Endothelial cell of umbilical vein (primary cell): ENCODE measurements at regions of chr9 and their contacts with region 1.

Region 1: DNA sequence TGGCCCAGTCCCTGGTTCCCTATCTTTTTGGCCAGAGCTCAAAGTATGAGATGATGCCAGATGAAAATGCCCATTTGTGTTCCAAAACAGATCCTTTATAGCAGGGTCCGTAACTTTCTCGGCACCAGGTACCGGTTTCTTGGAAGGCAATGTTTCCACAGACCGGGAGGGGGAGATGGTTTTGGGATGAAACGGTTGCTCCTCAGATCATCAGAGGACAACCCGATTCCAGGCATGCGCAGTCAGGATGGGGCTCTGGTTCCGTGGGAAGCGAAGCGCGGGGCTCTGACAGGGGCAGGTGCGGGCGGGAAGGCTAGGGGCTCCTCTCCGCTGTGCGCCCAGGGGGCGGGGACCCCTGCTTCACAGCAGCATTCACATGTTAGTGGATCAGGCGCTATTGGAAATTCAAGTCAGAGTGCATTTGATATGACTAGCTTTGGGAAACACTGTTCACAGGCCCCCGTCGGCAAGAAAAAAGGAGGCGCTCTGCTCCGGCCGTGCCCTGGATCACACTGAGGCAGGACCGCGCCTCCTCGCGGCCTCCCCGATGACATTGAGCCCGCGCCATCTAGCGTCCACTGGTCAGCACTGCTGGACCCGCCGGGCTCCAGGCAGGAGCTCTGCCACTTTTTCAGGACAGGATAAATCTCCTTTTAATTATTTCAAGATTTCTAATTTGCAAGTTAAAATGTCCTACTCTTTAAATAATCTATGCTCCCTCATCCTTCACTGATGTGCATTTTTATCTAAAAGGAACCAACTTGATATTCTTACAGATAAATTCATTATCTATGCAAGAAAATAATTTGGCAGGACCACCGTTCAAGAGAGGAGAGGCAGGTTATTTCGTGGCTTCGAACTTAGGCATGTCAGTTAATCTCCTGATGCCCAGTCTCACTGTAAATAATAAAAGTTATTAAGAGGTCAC is 190.0 kb downstream of the FANCC start:
- DNase-seq: peak; percentile 78
- H3K4me3 ChIP-seq: peak overlapping the region in 2 of 3 experiments; percentile 33 to 46
- H3K27ac ChIP-seq: no peak overlapping the region
- H3K4me1 ChIP-seq: no peaks in the 10 kb centered on the region
- H3K27me3 ChIP-seq: no peaks in the 10 kb centered on the region
- CTCF ChIP-seq: peak; percentile 97 to 99
- POLR2A ChIP-seq: no peak

Region 2: DNA sequence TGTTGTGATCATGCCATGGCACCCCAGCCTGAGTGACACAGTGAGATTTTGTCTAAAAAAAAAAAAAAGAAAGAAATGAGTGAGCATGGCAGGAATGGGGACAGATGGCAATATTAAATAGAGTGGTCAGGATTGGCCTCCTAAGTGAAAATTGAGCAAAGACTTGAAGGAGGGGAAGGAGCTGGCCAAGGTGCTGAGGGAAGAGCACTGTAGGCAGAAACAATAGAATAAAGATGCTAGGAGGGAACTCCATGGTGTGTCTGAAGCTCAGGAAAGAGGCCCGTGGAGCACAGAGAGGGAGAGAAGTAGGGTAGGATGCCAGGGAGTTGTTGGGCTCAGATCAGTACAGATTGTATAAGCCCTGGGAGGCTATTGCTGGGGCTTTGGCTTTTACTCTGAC is 637.0 kb before region 1 on chr9:
- CTCF ChIA-PET with region 1: no interaction called
- POLR2A ChIA-PET with region 1: no interaction called
- dilution Hi-C with region 1: no loop called
- intact Hi-C with region 1: no loop called
- DNase-seq: no peak
- H3K4me3 ChIP-seq: no peak overlapping the region
- H3K27ac ChIP-seq: no peak overlapping the region
- H3K4me1 ChIP-seq: no peaks in the 10 kb centered on the region
- H3K27me3 ChIP-seq: no peaks in the 10 kb centered on the region
- CTCF ChIP-seq: no peak
- POLR2A ChIP-seq: no peak

Region 3: DNA sequence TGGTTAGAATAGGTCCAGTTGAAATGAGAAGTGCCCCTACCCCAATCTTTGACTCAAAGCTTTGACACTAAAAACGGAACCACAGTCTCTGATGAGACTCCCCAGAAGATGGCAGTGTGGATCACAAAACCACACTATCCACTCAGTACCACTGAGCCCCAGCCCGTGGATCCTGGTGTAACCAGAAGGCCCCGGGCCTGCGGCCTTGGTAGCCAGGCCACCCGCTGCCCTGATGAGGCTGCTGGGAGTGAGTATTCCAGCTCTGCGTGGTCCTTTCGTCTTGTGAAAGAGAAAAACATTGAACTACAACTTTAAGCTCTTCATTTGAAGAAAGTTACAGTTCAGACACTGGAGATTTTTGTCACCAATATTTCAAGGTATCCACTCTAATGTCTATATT is 446.0 kb before region 1 on chr9:
- CTCF ChIA-PET with region 1: interaction called, 707 read pairs
- POLR2A ChIA-PET with region 1: interaction called, 6 read pairs
- dilution Hi-C with region 1: no loop called
- intact Hi-C with region 1: loop called (anchors 1 kb)
- DNase-seq: peak; percentile 67
- H3K4me3 ChIP-seq: no peak overlapping the region
- H3K27ac ChIP-seq: no peak overlapping the region
- H3K4me1 ChIP-seq: no peaks in the 10 kb centered on the region
- H3K27me3 ChIP-seq: peaks cover 3 to 4% of the 10 kb centered on the region in 2 experiments
- CTCF ChIP-seq: peak; percentile 68 to 74
- POLR2A ChIP-seq: no peak

Region 4: GRCh38 chr9:94734054-94734754 is 393.3 kb before region 1 on chr9:
- CTCF ChIA-PET with region 1: interaction called, 14 read pairs
- POLR2A ChIA-PET with region 1: no interaction called
- dilution Hi-C with region 1: no loop called
- intact Hi-C with region 1: no loop called
- DNase-seq: peak; percentile 59
- H3K4me3 ChIP-seq: peak overlapping the region in 1 of 3 experiments; percentile 30
- H3K27ac ChIP-seq: no peak overlapping the region
- H3K4me1 ChIP-seq: peaks cover 15% of the 10 kb centered on the region
- H3K27me3 ChIP-seq: no peaks in the 10 kb centered on the region
- CTCF ChIP-seq: no peak
- POLR2A ChIP-seq: no peak

Region 5: GRCh38 chr9:95004411-95005277 is 122.9 kb before region 1 on chr9:
- CTCF ChIA-PET with region 1: interaction called, 9 read pairs
- POLR2A ChIA-PET with region 1: no interaction called
- dilution Hi-C with region 1: no loop called
- intact Hi-C with region 1: loop called (anchors 2 kb)
- DNase-seq: peak; percentile 19
- H3K4me3 ChIP-seq: peak overlapping the region; percentile 88 to 97 (median 95)
- H3K27ac ChIP-seq: peak overlapping the region; percentile 93
- H3K4me1 ChIP-seq: peaks cover 47% of the 10 kb centered on the region
- H3K27me3 ChIP-seq: no peaks in the 10 kb centered on the region
- CTCF ChIP-seq: no peak
- POLR2A ChIP-seq: peak; percentile 22

Region 6: DNA sequence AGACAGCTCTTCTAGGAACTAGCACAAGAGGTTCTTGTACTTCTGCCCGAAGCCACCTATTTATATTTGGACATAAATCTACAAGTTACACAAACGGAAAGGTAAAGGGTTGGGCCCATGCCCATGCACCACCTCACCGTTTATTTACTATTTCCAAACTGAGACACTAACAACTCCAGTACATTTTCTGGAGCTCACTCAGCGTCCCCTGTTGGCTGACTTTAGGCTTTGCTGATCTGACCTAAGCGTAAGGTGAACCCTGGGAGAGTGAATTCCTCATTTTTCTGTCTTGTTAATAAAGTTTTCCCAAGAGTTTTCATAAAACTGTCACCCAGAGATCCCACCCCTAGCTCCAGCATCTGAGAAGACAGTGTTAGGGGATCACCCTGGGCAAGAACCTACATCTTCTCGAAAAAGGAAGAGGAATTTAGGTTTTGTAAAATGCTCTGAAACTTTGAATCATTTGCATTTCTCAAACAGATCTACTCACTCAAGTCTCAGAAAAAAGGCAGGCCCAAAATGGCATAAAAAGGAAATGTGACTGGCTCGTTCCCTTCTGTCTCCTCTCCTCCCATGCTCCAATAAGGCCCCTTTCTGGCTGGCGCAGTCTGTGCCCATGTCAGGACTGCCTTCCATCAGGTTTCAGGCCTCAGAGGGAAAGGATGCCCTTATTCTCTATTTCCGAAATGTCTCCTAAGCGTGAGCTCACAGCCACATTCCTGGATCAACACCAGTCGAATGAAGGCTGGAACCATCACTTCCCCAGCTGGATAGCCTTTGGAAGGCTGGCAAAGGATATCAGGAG is 11.3 kb before region 1 on chr9:
- CTCF ChIA-PET with region 1: interaction called, 48 read pairs
- POLR2A ChIA-PET with region 1: no interaction called
- dilution Hi-C with region 1: no loop called
- intact Hi-C with region 1: no loop called
- DNase-seq: no peak
- H3K4me3 ChIP-seq: no peak overlapping the region
- H3K27ac ChIP-seq: no peak overlapping the region
- H3K4me1 ChIP-seq: no peaks in the 10 kb centered on the region
- H3K27me3 ChIP-seq: no peaks in the 10 kb centered on the region
- CTCF ChIP-seq: no peak
- POLR2A ChIP-seq: no peak

Region 7: DNA sequence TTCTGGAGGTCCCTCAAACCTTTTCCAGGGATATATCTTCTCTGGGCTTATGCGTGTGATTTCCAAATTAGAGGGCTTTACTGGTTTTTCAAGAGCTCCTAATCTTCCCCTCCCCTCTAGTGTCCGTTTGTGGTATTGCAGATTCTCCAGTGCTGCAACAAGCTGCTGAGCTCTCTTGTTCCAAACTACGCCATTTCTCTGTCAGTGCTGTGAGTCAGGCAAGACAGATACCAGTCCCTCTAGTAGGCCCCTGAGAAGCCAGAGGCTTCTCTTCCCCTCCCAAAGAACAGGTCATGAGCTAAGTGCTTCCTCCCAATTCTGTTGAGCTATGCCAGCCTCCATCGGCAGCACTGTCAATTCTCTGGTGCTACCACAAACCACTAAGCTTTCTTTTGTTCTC is 40.5 kb after region 1 on chr9:
- CTCF ChIA-PET with region 1: interaction called, 79 read pairs
- POLR2A ChIA-PET with region 1: no interaction called
- dilution Hi-C with region 1: no loop called
- intact Hi-C with region 1: no loop called
- DNase-seq: peak; percentile 82
- H3K4me3 ChIP-seq: no peak overlapping the region
- H3K27ac ChIP-seq: no peak overlapping the region
- H3K4me1 ChIP-seq: peaks cover 16% of the 10 kb centered on the region
- H3K27me3 ChIP-seq: no peaks in the 10 kb centered on the region
- CTCF ChIP-seq: peak; percentile 74 to 82
- POLR2A ChIP-seq: no peak

Region 8: GRCh38 chr9:95284150-95285080 is 156.9 kb after region 1 on chr9:
- CTCF ChIA-PET with region 1: no interaction called
- POLR2A ChIA-PET with region 1: no interaction called
- dilution Hi-C with region 1: no loop called
- intact Hi-C with region 1: no loop called
- DNase-seq: no peak
- H3K4me3 ChIP-seq: no peak overlapping the region
- H3K27ac ChIP-seq: no peak overlapping the region
- H3K4me1 ChIP-seq: no peaks in the 10 kb centered on the region
- H3K27me3 ChIP-seq: no peaks in the 10 kb centered on the region
- CTCF ChIP-seq: no peak
- POLR2A ChIP-seq: no peak

Region 9: DNA sequence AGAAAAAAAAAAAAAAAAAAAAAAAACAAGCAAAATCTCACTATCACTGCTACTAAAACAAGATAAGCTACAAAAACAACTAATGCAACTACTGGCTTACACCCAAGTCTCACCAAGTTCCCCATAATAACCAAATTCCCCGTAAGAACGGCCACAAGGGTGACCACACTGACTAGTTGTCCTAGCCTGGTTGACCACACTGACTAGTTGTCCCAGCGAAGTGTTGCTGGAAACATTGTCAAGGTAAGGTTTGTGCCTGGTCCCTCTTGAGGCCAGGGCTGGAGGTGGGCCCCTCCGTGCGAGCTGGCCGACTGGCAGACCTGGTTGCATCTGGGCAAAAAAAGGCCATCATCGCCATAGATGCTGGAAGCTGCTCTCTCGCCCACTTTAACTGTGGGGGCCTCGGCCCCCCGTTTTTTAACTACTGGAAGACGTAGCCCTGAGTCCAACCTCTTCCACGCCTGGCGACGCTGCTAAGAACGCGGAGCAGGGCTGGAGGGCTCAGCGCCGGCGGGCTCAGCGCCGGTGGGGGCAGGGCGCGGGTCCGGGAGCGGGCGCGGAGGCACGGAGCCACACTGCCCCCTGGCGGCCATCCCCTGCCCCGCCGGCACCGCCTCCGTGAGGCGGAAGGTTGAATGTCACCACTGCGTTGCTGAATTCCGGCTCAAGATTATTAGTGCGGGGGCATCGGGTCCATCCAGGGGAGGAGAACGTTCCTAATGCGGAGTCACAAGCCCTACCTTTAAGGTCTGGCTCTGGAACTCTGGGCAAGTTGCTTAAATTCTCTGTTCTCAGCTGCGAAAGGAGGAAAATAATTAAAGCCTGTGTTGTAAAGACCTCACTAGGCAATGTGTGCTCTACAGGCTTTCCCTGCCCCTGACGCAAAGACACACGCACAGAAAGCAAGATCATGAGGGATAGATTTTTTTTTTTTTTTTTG is 1090.5 kb after region 1 on chr9:
- CTCF ChIA-PET with region 1: interaction called, 26 read pairs
- POLR2A ChIA-PET with region 1: no interaction called
- dilution Hi-C with region 1: no loop called
- intact Hi-C with region 1: loop called (anchors 5 kb)
- DNase-seq: peak; percentile 71
- H3K4me3 ChIP-seq: peak overlapping the region in 2 of 3 experiments; percentile 29 to 41
- H3K27ac ChIP-seq: no peak overlapping the region
- H3K4me1 ChIP-seq: peaks cover 7% of the 10 kb centered on the region
- H3K27me3 ChIP-seq: peaks cover 13 to 18% of the 10 kb centered on the region in 2 experiments
- CTCF ChIP-seq: peak; percentile 90 to 99
- POLR2A ChIP-seq: no peak